Activated T-helper 2 cell treated with anti-CD3 and anti-CD28 coated beads, Interferon-gamma antibody, Interleukin-2, Interleukin-4, amounts not matched to agents 10 μg/mL and 5 μg/mL and 100 μg/mL, durations not matched to agents 14 hours and 24 hours and 36 hours (primary cell): ENCODE measurements at regions of chr1 and their contacts with region 1.

Region 1: DNA sequence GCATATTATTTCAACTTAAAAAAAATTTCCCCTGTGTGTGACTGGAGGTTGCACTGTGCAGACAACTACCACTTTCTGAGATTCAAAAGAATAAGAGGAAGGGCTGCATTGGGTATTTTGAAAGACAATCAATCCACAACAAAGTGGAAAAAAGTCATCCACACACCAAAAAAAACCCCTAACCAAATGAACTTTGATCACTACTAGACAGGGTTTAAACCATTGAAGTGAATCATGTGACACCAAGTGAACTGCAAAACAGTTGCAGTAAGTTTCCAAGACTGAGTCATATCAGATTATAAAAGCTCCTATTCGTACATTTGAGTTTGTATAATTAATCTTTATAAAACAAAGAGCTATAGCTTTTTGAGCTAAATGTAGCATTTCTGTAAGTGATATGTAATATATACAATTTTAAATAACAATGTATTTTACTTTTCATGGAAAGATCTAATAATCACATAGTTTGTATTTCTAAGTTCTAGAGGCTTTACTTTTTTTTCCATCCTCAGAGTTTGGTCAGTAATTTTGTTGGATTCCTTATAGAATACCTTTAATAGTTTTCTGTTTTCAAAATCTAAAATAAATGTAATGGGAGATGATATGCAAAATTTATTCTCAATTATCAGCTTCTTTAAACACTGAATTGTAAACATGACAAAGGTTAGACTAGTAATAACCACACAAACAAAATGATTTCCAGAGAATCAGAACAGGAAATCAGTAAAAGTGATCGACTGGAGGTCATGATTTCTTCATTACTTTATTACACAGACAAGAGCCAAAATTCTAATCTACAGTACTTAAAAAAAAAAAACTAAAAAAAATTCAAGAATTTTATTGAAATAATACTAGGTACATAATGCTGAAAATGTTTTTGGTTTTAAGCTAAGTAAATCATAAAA is 50.5 kb upstream of the GFI1 start:
- DNase-seq: peak; percentile 35
- H3K4me3 Mint-ChIP-seq: peak overlapping the region; percentile 66
- H3K27ac Mint-ChIP-seq: peak overlapping the region; percentile 93
- H3K4me1 Mint-ChIP-seq: peaks cover 76% of the 10 kb centered on the region
- H3K27me3 Mint-ChIP-seq: no peaks in the 10 kb centered on the region

Region 2: GRCh38 chr1:92367496-92367895 is 169.7 kb before region 1 on chr1:
- intact Hi-C with region 1: loop called (anchors 5 kb)
- DNase-seq: no peak
- H3K4me3 Mint-ChIP-seq: peak overlapping the region; percentile 22
- H3K27ac Mint-ChIP-seq: peak overlapping the region; percentile 44
- H3K4me1 Mint-ChIP-seq: peaks cover 61% of the 10 kb centered on the region
- H3K27me3 Mint-ChIP-seq: no peaks in the 10 kb centered on the region

Region 3: DNA sequence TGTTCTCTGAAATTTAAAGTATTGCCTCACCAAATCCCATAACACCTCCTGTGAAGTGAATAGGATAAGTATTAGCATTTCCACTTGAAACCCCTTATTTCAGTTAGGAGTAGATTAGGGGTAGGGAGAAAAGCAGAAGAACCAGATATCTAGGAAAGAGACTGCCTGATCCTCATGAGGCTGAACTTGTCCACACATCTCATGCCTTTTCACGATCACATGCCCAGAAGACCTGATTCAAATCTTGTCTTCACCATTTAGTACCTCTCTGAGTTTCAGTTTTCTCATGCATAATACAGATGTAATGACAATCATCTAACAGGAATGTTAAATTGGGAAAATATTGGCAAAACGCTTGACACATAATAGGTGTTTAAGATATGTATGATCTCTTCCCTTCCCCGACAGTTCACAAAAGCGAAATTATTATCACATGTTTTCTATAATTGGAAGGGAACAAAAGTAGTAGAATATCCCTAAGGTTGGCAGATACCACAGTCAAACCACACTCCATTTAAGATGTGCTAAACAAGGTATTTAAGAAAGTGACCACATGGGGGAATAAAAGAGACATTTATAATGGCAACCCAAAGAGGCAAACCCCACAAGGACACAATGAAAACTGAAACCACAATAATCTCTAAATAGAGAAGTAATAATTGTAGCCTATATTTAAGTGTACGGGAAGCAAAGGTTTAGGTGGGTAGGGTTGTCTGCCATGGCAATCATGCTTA is 75.7 kb before region 1 on chr1:
- intact Hi-C with region 1: no loop called
- DNase-seq: no peak
- H3K4me3 Mint-ChIP-seq: no peak overlapping the region
- H3K27ac Mint-ChIP-seq: peak overlapping the region; percentile 47
- H3K4me1 Mint-ChIP-seq: peaks cover 56% of the 10 kb centered on the region
- H3K27me3 Mint-ChIP-seq: no peaks in the 10 kb centered on the region

Region 4: GRCh38 chr1:92502247-92502646 is 35.0 kb before region 1 on chr1:
- intact Hi-C with region 1: loop called (anchors 1 kb)
- DNase-seq: no peak
- H3K4me3 Mint-ChIP-seq: no peak overlapping the region
- H3K27ac Mint-ChIP-seq: peak overlapping the region; percentile 14
- H3K4me1 Mint-ChIP-seq: peaks cover 46% of the 10 kb centered on the region
- H3K27me3 Mint-ChIP-seq: no peaks in the 10 kb centered on the region

Region 5: GRCh38 chr1:92577261-92577895 is 40.1 kb after region 1 on chr1:
- intact Hi-C with region 1: loop called (anchors 2 kb)
- DNase-seq: no peak
- H3K4me3 Mint-ChIP-seq: peak overlapping the region; percentile 93
- H3K27ac Mint-ChIP-seq: peak overlapping the region; percentile 97
- H3K4me1 Mint-ChIP-seq: peaks cover 66% of the 10 kb centered on the region
- H3K27me3 Mint-ChIP-seq: no peaks in the 10 kb centered on the region

Region 6: GRCh38 chr1:93109578-93109977 is 572.3 kb after region 1 on chr1:
- intact Hi-C with region 1: no loop called
- DNase-seq: no peak
- H3K4me3 Mint-ChIP-seq: no peak overlapping the region
- H3K27ac Mint-ChIP-seq: no peak overlapping the region
- H3K4me1 Mint-ChIP-seq: peaks cover 20% of the 10 kb centered on the region
- H3K27me3 Mint-ChIP-seq: no peaks in the 10 kb centered on the region

Region 7: GRCh38 chr1:93123201-93123783 is 586.1 kb after region 1 on chr1:
- intact Hi-C with region 1: no loop called
- DNase-seq: no peak
- H3K4me3 Mint-ChIP-seq: no peak overlapping the region
- H3K27ac Mint-ChIP-seq: no peak overlapping the region
- H3K4me1 Mint-ChIP-seq: peaks cover 21% of the 10 kb centered on the region
- H3K27me3 Mint-ChIP-seq: no peaks in the 10 kb centered on the region